IMR-90 (cell line): ENCODE measurements at regions of chr21 and their contacts with region 1.

Region 1: DNA sequence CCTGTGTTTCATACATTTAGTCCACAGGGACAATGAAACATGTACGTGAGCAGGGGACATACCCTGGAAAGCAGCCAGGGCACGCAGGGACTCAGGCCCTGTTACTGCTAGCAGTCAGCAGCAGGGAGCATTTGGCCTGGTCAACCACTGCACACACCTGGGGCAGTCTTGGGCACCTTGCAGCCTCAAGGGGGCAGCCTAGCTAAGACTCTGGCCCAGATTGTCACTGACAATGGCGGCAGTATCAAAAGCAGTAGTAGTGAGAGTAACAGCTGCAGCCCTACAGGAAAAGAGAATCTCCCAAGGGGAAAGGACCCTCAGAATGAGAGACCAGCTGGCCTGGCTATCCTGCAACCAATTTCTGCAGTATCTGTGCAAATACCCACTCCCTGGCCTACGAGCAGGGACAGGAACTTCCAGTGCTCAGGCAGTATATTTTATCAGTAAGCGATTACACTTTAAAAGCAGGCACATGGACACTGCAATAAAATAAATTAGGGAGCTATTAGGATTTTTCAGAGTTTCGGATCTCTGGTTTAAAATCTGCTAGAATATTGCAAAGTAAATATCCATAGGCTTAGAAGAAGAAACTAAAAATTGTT is 475.6 kb downstream of the LTN1 start:
- DNase-seq: no peak
- ATAC-seq: no peak; the same call in 1 of the 2 replicates
- H3K4me3 ChIP-seq: no peak overlapping the region
- H3K27ac ChIP-seq: peak overlapping the region; percentile 13; the same call in 1 of the 2 replicates
- H3K4me1 ChIP-seq: no peaks in the 10 kb centered on the region; the same call in 1 of the 2 replicates
- H3K27me3 ChIP-seq: no peaks in the 10 kb centered on the region
- CTCF ChIP-seq: peak; percentile 32
- POLR2A ChIP-seq: no peak
- RAD21 ChIP-seq: peak; percentile 43

Region 2: DNA sequence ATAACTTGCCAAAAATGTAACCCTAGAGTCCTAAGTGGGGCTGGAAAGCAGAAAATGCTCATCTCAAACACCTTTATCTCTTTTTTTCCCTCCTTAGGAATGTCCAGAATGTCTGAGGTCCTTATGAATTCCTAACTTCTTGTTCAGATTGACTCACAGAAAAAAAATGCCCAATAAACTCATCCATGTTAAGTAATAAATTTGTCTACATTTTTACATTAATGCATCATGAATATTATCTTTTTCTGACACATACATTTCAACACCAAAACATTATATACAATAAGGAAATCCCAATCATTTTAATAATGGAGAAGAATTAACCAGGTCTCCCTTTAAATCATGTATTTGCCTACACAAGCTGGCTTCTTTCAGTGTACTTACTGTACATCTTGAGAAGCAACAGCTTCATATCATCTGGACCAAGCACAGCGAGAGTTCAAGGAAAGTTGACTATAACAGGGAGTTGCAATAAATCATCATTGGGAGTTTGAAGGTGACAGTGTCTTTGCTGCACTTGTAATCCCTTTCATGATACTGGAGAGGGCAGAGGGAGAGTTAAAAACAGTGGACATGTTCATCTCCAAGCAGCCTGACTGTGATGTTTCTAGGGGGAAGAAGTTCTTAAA is 89.6 kb before region 1 on chr21:
- CTCF ChIA-PET with region 1: no interaction called
- POLR2A ChIA-PET with region 1: no interaction called
- dilution Hi-C with region 1: no loop called
- in situ Hi-C with region 1: no loop called
- intact Hi-C with region 1: loop called (anchors 5 kb)
- DNase-seq: peak; percentile 67
- ATAC-seq: peak; percentile 62
- H3K4me3 ChIP-seq: no peak overlapping the region
- H3K27ac ChIP-seq: peak overlapping the region; percentile 34; the same call in 1 of the 2 replicates
- H3K4me1 ChIP-seq: peaks cover 21% of the 10 kb centered on the region; the same call in 1 of the 2 replicates
- H3K27me3 ChIP-seq: no peaks in the 10 kb centered on the region
- CTCF ChIP-seq: no peak
- POLR2A ChIP-seq: no peak
- RAD21 ChIP-seq: no peak

Region 3: DNA sequence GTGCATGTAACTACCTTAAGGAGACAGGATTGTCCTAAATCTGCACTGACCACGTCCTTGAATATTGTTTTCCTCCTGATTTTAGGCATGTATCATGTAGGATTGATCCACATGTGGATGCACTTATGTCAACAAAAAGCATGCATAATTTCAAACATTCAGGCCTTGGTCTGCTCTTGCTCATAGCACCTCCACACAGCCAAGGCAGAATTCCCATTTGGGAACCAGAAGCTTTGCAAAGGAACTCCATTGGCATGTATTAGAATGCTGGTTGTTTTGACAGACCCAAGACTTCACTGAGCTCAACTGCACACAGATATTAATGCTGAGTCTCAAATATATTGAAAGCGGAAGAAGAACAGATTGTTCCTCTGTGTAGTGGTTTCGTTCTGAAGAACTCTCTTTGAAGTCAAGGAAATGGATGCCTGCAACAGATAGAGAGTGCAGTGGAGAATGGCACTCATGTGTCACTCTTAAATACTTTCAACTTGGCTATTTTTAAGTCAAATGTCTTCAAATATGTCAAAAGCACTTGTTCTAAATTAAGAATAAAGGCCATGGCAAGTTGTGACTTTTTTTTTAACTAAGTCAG is 88.0 kb after region 1 on chr21:
- CTCF ChIA-PET with region 1: no interaction called
- POLR2A ChIA-PET with region 1: no interaction called
- dilution Hi-C with region 1: no loop called
- in situ Hi-C with region 1: no loop called
- intact Hi-C with region 1: no loop called
- DNase-seq: no peak
- ATAC-seq: no peak
- H3K4me3 ChIP-seq: no peak overlapping the region
- H3K27ac ChIP-seq: no peak overlapping the region
- H3K4me1 ChIP-seq: peaks cover 2% of the 10 kb centered on the region; the same call in 1 of the 2 replicates
- H3K27me3 ChIP-seq: no peaks in the 10 kb centered on the region
- CTCF ChIP-seq: no peak
- POLR2A ChIP-seq: no peak
- RAD21 ChIP-seq: no peak